ENCODE measurements at regions of chr10 and their contacts with region 1.

Region 1: GRCh38 chr10:91944880-91945630 is 21.5 kb downstream of the BTAF1 start:
- DNase-seq: peak; percentile 34
- H3K4me3 Mint-ChIP-seq: no peak overlapping the region
- H3K27ac Mint-ChIP-seq: no peak overlapping the region
- H3K4me1 Mint-ChIP-seq: peaks cover 18% of the 10 kb centered on the region
- H3K27me3 Mint-ChIP-seq: no peaks in the 10 kb centered on the region

Region 2: GRCh38 chr10:91923371-91924211 is 21.5 kb before region 1 on chr10 and contains the start of gene BTAF1:
- CTCF ChIA-PET with region 1: no interaction called
- intact Hi-C with region 1: loop called (anchors 1 kb)
- DNase-seq: peak; percentile 93
- H3K4me3 Mint-ChIP-seq: peak within 1 kb of the TSS; percentile 86
- H3K27ac Mint-ChIP-seq: peak within 1 kb of the TSS; percentile 99
- H3K4me1 Mint-ChIP-seq: peaks cover 35% of the 10 kb centered on the region
- H3K27me3 Mint-ChIP-seq: no peaks in the 10 kb centered on the region
- total RNA-seq, gene BTAF1: 42.6 to 43.6 TPM

Region 3: GRCh38 chr10:91974960-91975359 is 29.9 kb after region 1 on chr10:
- CTCF ChIA-PET with region 1: no interaction called
- intact Hi-C with region 1: loop called (anchors 1 kb)
- DNase-seq: no peak
- H3K4me3 Mint-ChIP-seq: no peak overlapping the region
- H3K27ac Mint-ChIP-seq: peak overlapping the region; percentile 73
- H3K4me1 Mint-ChIP-seq: peaks cover 37% of the 10 kb centered on the region
- H3K27me3 Mint-ChIP-seq: no peaks in the 10 kb centered on the region

Region 4: GRCh38 chr10:92011560-92012214 is 66.6 kb after region 1 on chr10:
- CTCF ChIA-PET with region 1: no interaction called
- intact Hi-C with region 1: loop called (anchors 5 kb)
- DNase-seq: no peak
- H3K4me3 Mint-ChIP-seq: no peak overlapping the region
- H3K27ac Mint-ChIP-seq: no peak overlapping the region
- H3K4me1 Mint-ChIP-seq: peaks cover 8% of the 10 kb centered on the region
- H3K27me3 Mint-ChIP-seq: no peaks in the 10 kb centered on the region

Region 5: DNA sequence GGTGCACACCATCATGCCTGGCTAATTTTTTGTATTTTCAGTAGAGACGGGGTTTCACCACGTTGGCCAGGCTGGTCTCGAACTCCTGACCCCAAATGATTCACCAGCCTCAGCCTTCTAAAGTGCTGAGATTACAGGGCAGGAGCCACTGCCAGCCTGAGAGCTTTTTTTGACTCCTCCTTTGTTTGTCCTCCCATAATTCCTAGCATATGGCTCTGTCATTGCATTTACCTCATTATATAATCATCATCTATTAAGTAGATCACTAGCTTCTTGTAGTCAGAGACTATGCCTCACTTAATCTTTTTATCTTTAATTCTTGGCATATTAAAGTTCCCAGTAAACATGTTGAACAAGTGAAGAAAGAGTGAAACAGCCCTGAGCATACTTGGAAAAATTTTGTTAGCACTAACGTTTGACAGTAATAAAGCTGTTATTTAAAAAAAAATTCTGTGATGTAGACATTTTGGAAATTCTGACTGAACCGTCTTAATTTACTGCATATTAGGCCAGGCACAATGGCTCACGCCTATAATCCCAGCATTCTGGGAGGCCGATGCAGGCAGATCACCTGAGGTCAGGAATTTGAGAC is 263.8 kb after region 1 on chr10:
- CTCF ChIA-PET with region 1: no interaction called
- intact Hi-C with region 1: loop called (anchors 5 kb)
- DNase-seq: no peak
- H3K4me3 Mint-ChIP-seq: no peak overlapping the region
- H3K27ac Mint-ChIP-seq: no peak overlapping the region
- H3K4me1 Mint-ChIP-seq: peaks cover 4% of the 10 kb centered on the region
- H3K27me3 Mint-ChIP-seq: no peaks in the 10 kb centered on the region

Region 6: DNA sequence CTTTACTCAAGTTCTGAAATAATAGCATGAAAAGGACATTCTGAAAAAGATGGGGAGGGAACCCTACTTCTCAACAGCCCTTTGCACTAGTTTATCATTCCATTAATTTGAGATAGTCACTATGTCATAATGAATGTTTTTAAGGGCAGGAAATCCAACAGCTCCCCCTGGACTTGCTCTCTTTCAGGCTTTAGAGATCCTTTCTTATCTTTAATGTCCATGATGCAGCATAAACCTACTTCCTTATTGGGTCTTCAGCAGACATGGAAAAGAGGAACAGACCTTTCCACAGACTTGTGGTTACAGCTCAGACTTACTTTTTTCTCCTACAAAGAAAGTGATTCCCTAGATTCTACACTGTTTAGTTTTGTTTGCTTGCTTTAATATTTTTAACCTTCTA is 541.6 kb after region 1 on chr10:
- CTCF ChIA-PET with region 1: no interaction called
- intact Hi-C with region 1: no loop called
- DNase-seq: no peak
- H3K4me3 Mint-ChIP-seq: no peak overlapping the region
- H3K27ac Mint-ChIP-seq: no peak overlapping the region
- H3K4me1 Mint-ChIP-seq: no peaks in the 10 kb centered on the region
- H3K27me3 Mint-ChIP-seq: no peaks in the 10 kb centered on the region

Measured in activated naive CD4-positive, alpha-beta T cell treated with anti-CD3 and anti-CD28 coated beads for 36 hours (primary cell).